Sigmoid colon (tissue), 7 donors: ENCODE measurements at regions of chr17 and their contacts with region 1.

Region 1: GRCh38 chr17:47698749-47699535 is 5.0 kb downstream of the TBKBP1 start:
- DNase-seq: peak; percentile 74
- H3K4me3 ChIP-seq: no peak overlapping the region
- H3K27ac ChIP-seq: no peak overlapping the region
- H3K4me1 ChIP-seq: peaks cover 0 to 16% (median 11%) of the 10 kb centered on the region in 4 donors
- H3K27me3 ChIP-seq: no peaks in the 10 kb centered on the region
- CTCF ChIP-seq: peak; percentile 68 to 96 (median 80)
- EP300 ChIP-seq: no peak
- POLR2A ChIP-seq: no peak

Region 2: GRCh38 chr17:47650525-47651522 is 48.1 kb before region 1 on chr17:
- intact Hi-C with region 1: loop called (anchors 5 kb)
- DNase-seq: peak; percentile 98
- H3K4me3 ChIP-seq: peak overlapping the region; percentile 66 to 100 (median 90)
- H3K27ac ChIP-seq: peak overlapping the region; percentile 96 to 97 (median 96)
- H3K4me1 ChIP-seq: peaks cover 0 to 58% (median 48%) of the 10 kb centered on the region in 4 donors
- H3K27me3 ChIP-seq: no peaks in the 10 kb centered on the region
- CTCF ChIP-seq: no peak
- EP300 ChIP-seq: no peak
- POLR2A ChIP-seq: no peak

Region 3: DNA sequence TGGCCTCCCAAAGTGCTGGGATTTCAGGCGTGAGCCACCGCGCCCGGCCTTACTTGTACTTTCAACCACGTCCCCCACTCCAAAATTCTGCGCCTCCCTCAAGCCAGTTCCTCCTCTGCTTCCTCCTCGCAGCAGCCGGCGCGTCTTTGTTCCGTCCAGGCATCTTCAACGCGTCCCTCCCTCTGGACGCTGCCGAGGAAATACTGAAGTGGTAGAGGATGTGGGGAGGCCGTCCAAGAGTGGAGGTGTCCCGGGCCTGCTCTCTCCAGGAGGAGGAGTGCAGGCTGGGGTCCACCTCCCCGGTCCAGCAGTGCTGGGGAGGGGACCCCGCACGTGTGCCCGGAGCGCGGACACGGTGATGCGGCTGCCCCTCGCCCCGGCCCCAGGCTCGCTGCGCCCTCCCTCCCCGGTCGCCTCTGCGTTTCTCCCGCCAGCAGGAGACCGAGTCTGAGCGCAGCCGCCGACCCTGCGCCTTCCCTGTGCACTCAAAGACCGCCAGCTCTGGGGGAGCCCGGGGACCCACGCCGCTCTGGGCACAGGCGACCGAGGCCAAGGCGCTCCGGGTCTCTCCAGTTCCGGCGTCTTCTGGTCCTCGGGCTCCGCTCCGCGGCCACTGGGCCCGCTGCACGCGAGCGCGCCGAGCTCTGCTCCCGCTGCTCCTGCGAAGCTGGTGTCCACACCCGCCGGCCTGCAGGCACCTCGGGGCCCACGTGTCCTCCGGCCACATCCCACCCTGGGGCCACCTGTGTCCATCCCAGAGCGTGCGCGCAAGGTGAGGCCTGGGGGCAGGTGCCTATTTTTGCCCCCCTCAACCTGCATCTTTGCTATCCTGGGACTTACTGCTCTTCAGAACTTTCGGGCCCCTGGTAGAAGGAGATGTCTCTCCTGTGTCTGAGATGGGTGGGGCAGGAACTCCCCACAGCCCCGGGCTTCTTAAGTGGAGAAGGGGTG is 90.9 kb after region 1 on chr17:
- intact Hi-C with region 1: loop called (anchors 5 kb)
- DNase-seq: no peak
- H3K4me3 ChIP-seq: peak overlapping the region; percentile 18 to 51 (median 42)
- H3K27ac ChIP-seq: peak overlapping the region in 2 of 4 donors; percentile 31 to 40
- H3K4me1 ChIP-seq: peaks cover 0 to 10% (median 9%) of the 10 kb centered on the region in 4 donors
- H3K27me3 ChIP-seq: peaks cover 17 to 82% (median 54%) of the 10 kb centered on the region in 3 donors
- CTCF ChIP-seq: peak in 3 of 4 experiments; percentile 35 to 48 (median 38)
- EP300 ChIP-seq: no peak
- POLR2A ChIP-seq: no peak

Region 4: DNA sequence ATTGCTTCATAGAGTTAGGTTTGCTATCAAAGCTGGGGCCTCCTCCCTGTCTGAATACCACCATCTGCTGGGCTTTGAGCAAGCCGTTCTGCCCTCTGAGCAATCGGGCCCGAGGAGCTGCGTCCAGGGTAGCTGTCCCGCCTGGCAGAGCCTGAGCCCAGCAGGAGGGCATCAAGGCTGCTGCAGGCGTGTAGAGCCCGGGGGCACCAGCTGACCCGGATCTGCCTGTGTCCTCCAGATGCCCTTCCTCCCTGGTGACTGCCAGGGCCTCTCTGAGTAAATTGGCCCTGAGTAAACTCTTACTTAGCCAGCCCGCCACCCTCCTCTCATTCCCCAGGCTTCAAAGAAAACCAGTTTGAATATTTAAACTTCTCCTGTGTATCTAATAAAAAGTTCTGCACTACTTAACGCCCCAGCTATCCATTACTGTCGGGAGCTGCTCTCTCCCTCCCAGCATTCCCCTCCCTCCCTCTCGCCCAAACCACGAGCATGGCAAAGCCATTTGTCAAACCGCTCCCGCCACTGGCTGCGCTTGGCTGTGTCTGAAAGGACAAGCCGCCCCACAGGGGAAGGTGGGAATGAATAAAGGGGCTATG is 288.4 kb after region 1 on chr17:
- intact Hi-C with region 1: no loop called
- DNase-seq: peak; percentile 76
- H3K4me3 ChIP-seq: no peak overlapping the region
- H3K27ac ChIP-seq: peak overlapping the region; percentile 47 to 75 (median 72)
- H3K4me1 ChIP-seq: peaks cover 0 to 13% (median 12%) of the 10 kb centered on the region in 4 donors
- H3K27me3 ChIP-seq: no peaks in the 10 kb centered on the region
- CTCF ChIP-seq: no peak
- EP300 ChIP-seq: no peak
- POLR2A ChIP-seq: no peak